ENCODE measurements at regions of chr20 and their contacts with region 1.

Region 1: DNA sequence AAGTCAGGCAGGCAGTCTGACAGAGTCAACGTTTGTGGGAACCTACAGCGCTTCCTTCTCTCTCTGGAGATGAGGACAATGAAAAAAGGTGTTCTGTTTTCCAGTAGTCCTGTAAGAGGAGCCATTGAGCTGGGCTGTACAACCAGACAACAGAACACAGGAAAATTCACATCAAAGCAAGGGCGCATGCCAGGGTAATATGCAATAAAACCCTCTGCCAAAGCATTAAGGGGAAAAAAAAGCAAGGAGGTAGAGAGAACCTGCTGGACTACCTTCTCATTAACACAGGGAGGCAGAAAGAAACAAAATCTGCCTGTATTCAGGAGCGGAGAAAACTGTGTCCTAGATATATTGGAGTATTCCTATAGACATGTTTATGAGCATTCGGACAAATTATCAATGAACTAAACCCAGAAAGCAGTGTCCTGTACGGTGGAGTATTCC is 1.3 kb downstream of the RNF24 start:
- DNase-seq: peak; percentile 77 to 90
- H3K4me3 ChIP-seq: peak overlapping the region; percentile 92
- H3K27ac ChIP-seq: peak overlapping the region; percentile 62
- H3K4me1 ChIP-seq: peaks cover 55% of the 10 kb centered on the region
- H3K27me3 ChIP-seq: no peaks in the 10 kb centered on the region
- CTCF ChIP-seq: peak; percentile 74

Region 2: GRCh38 chr20:3786665-3787323 is 227.3 kb before region 1 on chr20 and contains the start of gene CENPB:
- CTCF ChIA-PET with region 1: no interaction called
- POLR2A ChIA-PET with region 1: no interaction called
- intact Hi-C with region 1: loop called (anchors 10 kb)
- DNase-seq: peak; percentile 59 to 96
- H3K4me3 ChIP-seq: peak within 1 kb of the TSS; percentile 68
- H3K27ac ChIP-seq: no peak within 1 kb of the TSS
- H3K4me1 ChIP-seq: peaks cover 36% of the 10 kb centered on the region
- H3K27me3 ChIP-seq: no peaks in the 10 kb centered on the region
- CTCF ChIP-seq: peak; percentile 56; the same call in 1 of the 2 replicates
- total RNA-seq, gene CENPB: 70.8 and 82.9 TPM in 2 replicates

Region 3: DNA sequence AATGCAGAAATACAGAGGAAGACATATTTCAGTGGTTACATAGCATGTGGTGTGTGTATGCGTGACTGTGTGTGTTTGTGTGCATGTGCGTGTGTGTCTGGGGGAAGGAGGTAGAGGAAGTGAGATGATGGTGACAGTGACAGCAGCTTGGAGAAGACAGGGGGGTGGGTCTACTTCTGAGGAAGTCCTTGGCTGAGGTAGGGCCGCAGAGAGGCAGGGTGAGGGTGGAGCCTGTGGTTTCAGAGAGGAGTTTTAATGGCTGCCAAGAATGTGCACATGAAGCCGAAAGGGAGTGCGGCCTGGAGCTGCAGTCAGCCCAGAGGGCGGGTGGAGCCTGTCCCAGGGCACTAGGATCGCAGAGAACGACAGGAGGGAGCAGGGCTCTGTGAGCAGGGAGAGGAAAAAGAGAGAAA is 24.0 kb after region 1 on chr20:
- CTCF ChIA-PET with region 1: no interaction called
- POLR2A ChIA-PET with region 1: no interaction called
- intact Hi-C with region 1: loop called (anchors 1 kb)
- DNase-seq: peak; percentile 70 to 81
- H3K4me3 ChIP-seq: no peak overlapping the region
- H3K27ac ChIP-seq: no peak overlapping the region
- H3K4me1 ChIP-seq: peaks cover 41% of the 10 kb centered on the region
- H3K27me3 ChIP-seq: no peaks in the 10 kb centered on the region
- CTCF ChIP-seq: no peak

Region 4: GRCh38 chr20:4076671-4077070 is 62.6 kb after region 1 on chr20:
- CTCF ChIA-PET with region 1: interaction called, 7 read pairs
- POLR2A ChIA-PET with region 1: interaction called, 3 read pairs
- intact Hi-C with region 1: loop called (anchors 1 kb)
- DNase-seq: peak; percentile 29 to 89
- H3K4me3 ChIP-seq: no peak overlapping the region
- H3K27ac ChIP-seq: peak overlapping the region; percentile 59
- H3K4me1 ChIP-seq: peaks cover 11% of the 10 kb centered on the region
- H3K27me3 ChIP-seq: no peaks in the 10 kb centered on the region
- CTCF ChIP-seq: no peak

Region 5: GRCh38 chr20:4091490-4092479 is 77.7 kb after region 1 on chr20:
- CTCF ChIA-PET with region 1: no interaction called
- POLR2A ChIA-PET with region 1: no interaction called
- intact Hi-C with region 1: loop called (anchors 2 kb)
- DNase-seq: peak; percentile 35 to 72
- H3K4me3 ChIP-seq: no peak overlapping the region
- H3K27ac ChIP-seq: no peak overlapping the region
- H3K4me1 ChIP-seq: no peaks in the 10 kb centered on the region
- H3K27me3 ChIP-seq: no peaks in the 10 kb centered on the region
- CTCF ChIP-seq: peak; percentile 75

Region 6: DNA sequence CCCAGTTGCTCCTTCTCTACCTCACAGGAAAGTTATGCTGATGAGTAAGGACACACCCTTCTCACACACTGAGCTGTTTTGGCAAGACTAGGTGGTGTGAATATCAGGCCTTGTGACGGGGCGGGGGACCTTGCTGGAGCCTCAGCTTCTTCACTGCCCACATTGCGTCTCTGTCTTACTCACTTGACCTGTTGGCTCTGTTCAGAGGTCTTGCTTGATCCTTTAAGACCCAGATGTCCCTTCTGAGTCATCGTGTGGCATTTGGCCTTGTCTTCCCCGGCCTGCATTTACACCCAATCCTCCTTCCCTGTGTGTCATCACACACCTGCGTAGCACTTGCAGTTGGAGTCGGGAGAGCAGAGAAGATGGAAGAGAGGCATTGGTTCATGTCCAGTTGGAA is 699.3 kb after region 1 on chr20:
- CTCF ChIA-PET with region 1: no interaction called
- POLR2A ChIA-PET with region 1: no interaction called
- intact Hi-C with region 1: loop called (anchors 5 kb)
- DNase-seq: peak; percentile 91 to 100
- H3K4me3 ChIP-seq: no peak overlapping the region
- H3K27ac ChIP-seq: peak overlapping the region; percentile 78
- H3K4me1 ChIP-seq: peaks cover 22% of the 10 kb centered on the region
- H3K27me3 ChIP-seq: no peaks in the 10 kb centered on the region
- CTCF ChIP-seq: no peak

Measured in PC-9 (cell line).